ENCODE measurements at regions of chr11 and their contacts with region 1.

Region 1: DNA sequence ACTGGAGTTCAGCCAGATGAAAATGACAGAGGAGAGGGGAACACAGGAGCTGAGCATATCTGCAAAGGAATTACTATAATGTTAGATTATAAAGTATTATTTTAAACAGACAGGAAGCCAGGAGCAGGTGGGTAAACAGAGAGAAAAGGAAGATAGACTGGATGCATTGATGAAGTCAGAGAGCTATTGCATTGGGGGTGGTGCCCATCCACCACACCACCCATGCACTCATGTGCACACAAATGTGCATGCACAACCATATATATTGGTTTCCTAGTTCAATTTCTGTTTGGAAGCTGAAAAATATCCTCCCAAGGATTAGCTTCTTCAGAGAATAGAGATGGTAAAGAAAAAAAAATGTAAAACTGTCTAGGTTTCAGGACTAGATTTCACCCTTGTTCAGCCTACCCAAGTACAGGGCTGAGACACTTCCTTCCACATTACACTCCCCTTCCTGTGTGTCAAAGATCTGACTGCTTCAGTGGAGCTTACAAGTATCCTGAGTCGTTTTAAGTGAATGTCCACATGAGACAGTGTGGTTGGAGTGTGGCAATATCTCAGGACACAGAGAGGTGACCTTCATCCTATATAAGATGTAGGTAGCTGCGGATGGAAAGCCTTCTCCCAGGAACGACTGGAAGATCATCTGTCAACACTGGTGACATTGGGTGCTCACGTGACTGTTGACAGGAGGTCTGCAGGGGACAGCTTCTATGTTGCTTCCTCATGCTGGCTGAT is 12.2 kb upstream of the SMPD1 start:
- DNase-seq: no peak
- CTCF ChIP-seq: no peak

Region 2: GRCh38 chr11:6269994-6270393 is 108.1 kb before region 1 on chr11:
- CTCF ChIA-PET with region 1: no interaction called
- POLR2A ChIA-PET with region 1: no interaction called
- DNase-seq: no peak
- CTCF ChIP-seq: no peak

Region 3: GRCh38 chr11:6389921-6390724 is 12.1 kb after region 1 on chr11 and contains the start of gene SMPD1:
- CTCF ChIA-PET with region 1: interaction called, 39 read pairs
- POLR2A ChIA-PET with region 1: interaction called, 10 read pairs
- DNase-seq: peak; percentile 97
- CTCF ChIP-seq: no peak

Region 4: GRCh38 chr11:6431861-6432260 is 53.8 kb after region 1 on chr11:
- CTCF ChIA-PET with region 1: interaction called, 43 read pairs
- POLR2A ChIA-PET with region 1: no interaction called
- DNase-seq: no peak
- CTCF ChIP-seq: no peak

Region 5: GRCh38 chr11:6473481-6474422 is 95.7 kb after region 1 on chr11 and contains the start of gene TRIM3:
- CTCF ChIA-PET with region 1: interaction called, 15 read pairs
- POLR2A ChIA-PET with region 1: interaction called, 3 read pairs
- DNase-seq: peak; percentile 94
- CTCF ChIP-seq: no peak

Region 6: DNA sequence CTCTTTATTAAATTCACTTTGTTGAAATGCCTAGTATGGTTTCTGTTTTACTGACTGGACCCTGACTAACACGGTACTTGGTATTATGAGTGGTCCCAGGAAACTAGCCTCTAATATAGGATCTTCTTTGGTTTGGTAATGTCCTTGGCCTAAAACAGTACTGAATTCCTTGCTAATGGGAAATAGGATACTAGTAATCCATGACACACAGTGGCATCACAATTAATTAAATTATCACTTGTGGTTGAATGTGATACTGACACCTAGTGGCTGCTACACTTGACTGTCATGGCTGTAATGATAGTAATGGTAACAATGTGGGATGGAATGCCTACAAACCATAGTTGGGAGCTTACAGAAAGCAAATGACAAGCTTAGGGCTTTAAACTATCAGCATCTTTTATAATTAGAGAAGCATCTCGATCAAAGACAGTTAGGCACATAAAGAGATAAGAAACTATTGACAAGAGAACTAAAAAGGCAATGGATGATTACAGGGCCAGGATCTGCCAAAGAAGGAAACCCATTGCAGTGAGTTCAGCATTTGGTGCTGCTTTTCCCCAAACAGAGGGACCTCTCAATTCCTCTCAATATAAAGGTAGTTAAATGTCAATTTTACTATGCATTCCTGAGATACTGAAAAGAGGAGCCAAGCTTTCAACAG is 127.6 kb after region 1 on chr11:
- CTCF ChIA-PET with region 1: interaction called, 63 read pairs
- POLR2A ChIA-PET with region 1: no interaction called
- DNase-seq: peak; percentile 42
- CTCF ChIP-seq: peak; percentile 77

Region 7: DNA sequence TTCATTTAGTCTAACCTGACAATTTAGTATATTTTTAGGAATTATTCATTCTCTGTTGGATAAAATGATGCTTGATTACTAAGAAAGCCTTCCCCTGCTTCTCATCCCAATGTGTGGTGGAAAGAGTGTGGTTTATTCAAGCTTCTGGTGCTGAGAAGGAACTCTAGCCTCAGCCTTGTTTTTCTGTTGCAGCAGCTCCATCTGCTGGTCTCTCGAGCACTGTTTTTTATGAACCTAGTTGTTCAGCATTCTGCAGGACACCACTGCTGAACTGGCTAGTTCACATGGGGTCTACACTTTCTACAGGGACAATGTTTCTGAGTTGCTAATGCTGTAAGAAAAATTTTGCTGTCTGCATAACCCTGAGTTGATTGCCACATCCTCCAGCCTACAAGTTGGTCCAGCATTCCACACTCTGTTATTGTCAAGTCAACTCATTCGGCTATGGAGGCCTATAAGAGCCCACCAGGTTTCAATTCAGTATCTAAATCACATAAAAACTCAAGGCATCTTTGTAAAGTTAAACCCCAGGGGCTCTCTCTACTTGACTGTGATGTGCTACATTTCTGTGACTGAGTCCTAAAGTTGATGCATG is 379.4 kb after region 1 on chr11:
- CTCF ChIA-PET with region 1: interaction called, 13 read pairs
- POLR2A ChIA-PET with region 1: no interaction called
- DNase-seq: peak; percentile 34
- CTCF ChIP-seq: peak; percentile 69